ENCODE measurements at regions of chr7 and their contacts with region 1.

Region 1: DNA sequence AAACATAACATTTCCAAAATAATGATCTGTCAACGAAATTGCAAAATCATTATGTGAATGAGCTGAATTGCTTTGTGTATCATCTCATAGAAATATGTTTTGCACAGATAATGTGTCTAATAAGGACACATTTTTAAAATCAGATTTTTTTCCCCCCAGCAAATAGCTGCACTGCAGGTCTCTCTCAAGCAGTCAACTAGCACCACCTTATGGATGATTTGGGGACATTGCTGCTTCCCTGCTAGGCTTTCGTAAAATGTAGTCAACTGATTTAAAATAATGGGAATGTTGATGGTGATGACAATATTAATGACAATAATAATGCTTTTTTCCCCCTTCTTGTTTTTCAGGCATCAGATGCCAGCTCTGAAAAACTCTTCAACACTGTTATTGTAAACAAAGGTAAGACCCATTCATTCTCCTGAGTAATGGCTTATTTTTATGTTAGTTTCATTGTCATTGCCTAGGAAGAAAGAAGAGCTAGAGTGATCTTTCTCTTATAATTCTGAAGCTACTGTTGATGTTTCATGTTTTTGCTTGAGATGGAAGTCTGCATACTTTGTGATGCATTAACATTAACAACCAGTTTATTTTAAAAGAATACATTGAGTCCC is 433.6 kb upstream of the GALNT17 start:
- DNase-seq: no peak
- H3K4me3 ChIP-seq: no peak overlapping the region
- CTCF ChIP-seq: peak; percentile 81

Region 2: DNA sequence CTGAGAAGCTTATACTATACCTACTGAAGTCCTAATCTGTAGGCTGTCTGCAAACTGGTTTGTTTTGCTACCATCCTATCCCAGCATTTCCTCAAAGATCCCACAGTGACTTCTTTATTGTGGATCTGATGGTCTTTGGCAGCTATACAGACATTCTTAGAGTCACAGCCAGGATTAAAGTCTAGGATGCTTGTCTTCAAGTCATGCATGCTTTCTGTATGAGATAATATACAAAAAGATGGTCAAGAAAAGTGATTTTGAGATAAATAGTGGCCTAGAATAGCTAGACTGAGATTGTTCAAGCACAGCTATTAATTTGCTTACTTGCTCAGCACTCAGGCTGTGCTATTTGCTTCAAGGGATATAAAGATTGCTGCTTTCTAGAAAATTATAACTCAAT is 645.6 kb before region 1 on chr7:
- CTCF ChIA-PET with region 1: interaction called, 21 read pairs
- POLR2A ChIA-PET with region 1: no interaction called
- DNase-seq: peak; percentile 76
- H3K4me3 ChIP-seq: no peak overlapping the region
- CTCF ChIP-seq: no peak

Region 3: GRCh38 chr7:70154521-70155180 is 543.7 kb before region 1 on chr7:
- CTCF ChIA-PET with region 1: interaction called, 50 read pairs
- POLR2A ChIA-PET with region 1: no interaction called
- DNase-seq: no peak
- H3K4me3 ChIP-seq: no peak overlapping the region
- CTCF ChIP-seq: no peak

Region 4: GRCh38 chr7:70681469-70682350 is 16.6 kb before region 1 on chr7:
- CTCF ChIA-PET with region 1: interaction called, 12 read pairs
- POLR2A ChIA-PET with region 1: interaction called, 3 read pairs
- DNase-seq: no peak
- H3K4me3 ChIP-seq: peak overlapping the region; percentile 52
- CTCF ChIP-seq: no peak

Measured in AG04449 (cell line).